GM12878 (cell line): ENCODE measurements at regions of chr3 and their contacts with region 1.

Region 1: GRCh38 chr3:129238945-129239706 is 10.3 kb upstream of the COPG1 start:
- DNase-seq: no peak
- ATAC-seq: peak; percentile 81
- H3K4me3 ChIP-seq: no peak overlapping the region; the same call in 1 of the 2 replicates
- H3K27ac ChIP-seq: no peak overlapping the region
- H3K4me1 ChIP-seq: peaks cover 13% of the 10 kb centered on the region
- H3K27me3 ChIP-seq: no peaks in the 10 kb centered on the region
- CTCF ChIP-seq: no peak
- EP300 ChIP-seq: no peak
- POLR2A ChIP-seq: no peak
- RAD21 ChIP-seq: no peak

Region 2: GRCh38 chr3:128714887-128715491 is 524.1 kb before region 1 on chr3:
- CTCF ChIA-PET with region 1: no interaction called
- POLR2A ChIA-PET with region 1: no interaction called
- RAD21 ChIA-PET with region 1: no interaction called
- SMC1A ChIA-PET with region 1: no interaction called
- in situ Hi-C with region 1: no loop called
- intact Hi-C with region 1: no loop called
- DNase-seq: no peak
- ATAC-seq: peak; percentile 51
- H3K4me3 ChIP-seq: no peak overlapping the region
- H3K27ac ChIP-seq: no peak overlapping the region
- H3K4me1 ChIP-seq: 0 out of 2 replicates have a peak, but pooled peaks cover 4% of the 10 kb centered on the region
- H3K27me3 ChIP-seq: no peaks in the 10 kb centered on the region
- CTCF ChIP-seq: no peak
- EP300 ChIP-seq: no peak
- POLR2A ChIP-seq: no peak
- RAD21 ChIP-seq: no peak

Region 3: DNA sequence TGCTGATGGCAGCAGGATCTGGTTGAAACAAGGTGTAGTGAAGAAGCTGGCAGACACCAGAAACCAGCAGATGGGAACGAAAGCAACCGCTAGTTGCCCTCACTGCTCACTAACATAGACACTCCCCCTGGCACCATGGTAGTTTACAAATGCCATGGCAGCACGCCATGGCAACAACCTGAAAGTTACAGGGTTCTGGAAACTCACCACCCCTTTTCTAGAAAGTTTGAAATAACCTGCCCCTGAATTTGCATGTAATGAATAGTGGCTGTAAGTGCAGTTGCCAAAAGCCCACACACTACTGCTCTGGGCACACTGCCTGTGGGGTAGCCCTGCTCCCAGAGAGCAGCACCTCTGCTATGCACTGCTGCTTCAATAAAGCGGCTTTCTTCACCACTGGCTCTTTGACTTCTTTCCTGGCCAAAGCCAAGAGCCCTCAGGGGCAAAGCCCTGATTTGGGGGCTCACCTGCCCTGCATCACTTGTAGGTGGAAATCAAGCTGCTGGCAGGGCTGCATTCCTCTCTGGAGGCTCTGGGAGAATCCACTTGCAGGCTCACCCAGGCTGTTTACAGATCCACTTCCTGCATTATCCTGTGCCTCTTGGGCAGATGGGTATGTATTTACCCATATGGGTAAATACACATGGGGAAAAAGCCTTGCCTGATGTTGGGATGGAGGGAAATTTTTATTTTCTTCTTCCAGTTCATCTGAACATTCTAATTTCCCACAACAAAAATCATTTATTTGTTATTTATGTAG is 180.5 kb before region 1 on chr3:
- CTCF ChIA-PET with region 1: interaction called, 220 read pairs
- POLR2A ChIA-PET with region 1: interaction called, 4 read pairs
- RAD21 ChIA-PET with region 1: interaction called, 88 read pairs
- SMC1A ChIA-PET with region 1: interaction called, 118 read pairs
- in situ Hi-C with region 1: loop called (anchors 5 kb)
- intact Hi-C with region 1: no loop called
- DNase-seq: peak; percentile 48
- ATAC-seq: peak; percentile 82
- H3K4me3 ChIP-seq: no peak overlapping the region
- H3K27ac ChIP-seq: no peak overlapping the region
- H3K4me1 ChIP-seq: 0 out of 2 replicates have a peak, but pooled peaks cover 3% of the 10 kb centered on the region
- H3K27me3 ChIP-seq: no peaks in the 10 kb centered on the region; a peak in 1 of 4 replicates
- CTCF ChIP-seq: no peak
- EP300 ChIP-seq: no peak
- POLR2A ChIP-seq: no peak
- RAD21 ChIP-seq: no peak

Region 4: DNA sequence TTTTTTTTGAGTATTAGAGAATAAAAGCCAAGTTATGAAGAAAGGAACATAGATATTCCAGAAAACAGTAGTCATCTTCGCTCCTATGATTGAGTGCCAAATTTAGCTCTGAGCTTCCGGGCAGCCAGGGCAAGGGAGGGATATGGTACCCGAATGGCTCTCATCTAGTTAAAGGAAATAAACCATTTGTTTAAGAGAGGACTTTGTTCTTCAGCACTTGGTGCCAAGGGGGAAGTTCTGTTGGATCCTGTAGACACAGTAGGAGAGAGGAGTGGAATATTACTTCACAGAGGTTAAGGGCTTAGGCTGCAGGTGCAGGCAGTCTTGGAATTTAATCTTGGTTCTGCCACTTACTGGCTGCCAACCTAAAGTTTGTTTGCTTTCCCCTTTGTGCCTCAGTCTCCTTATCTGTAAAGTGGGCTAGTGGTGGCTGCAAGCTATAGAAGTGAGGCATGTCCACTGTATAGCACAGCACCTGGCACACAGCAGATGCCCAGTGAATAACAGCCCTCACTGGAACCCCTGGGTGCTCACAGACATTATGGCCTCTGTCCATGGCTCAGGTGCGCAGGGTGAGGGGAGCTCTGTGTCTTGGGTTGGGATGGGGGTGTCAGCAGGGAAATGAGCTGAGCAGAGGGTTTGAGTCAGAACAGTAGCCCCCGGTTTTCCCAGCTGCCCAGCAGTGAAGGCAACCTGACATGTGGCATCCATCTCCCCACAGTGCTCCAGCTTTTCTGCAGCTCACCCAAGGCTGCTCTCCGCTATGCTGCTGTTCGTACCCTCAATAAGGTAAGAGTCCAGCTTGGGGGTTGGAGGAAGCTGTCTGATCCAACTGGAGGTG is 20.7 kb after region 1 on chr3:
- CTCF ChIA-PET with region 1: no interaction called
- POLR2A ChIA-PET with region 1: no interaction called
- RAD21 ChIA-PET with region 1: no interaction called
- SMC1A ChIA-PET with region 1: no interaction called
- in situ Hi-C with region 1: no loop called
- intact Hi-C with region 1: no loop called
- DNase-seq: no peak
- ATAC-seq: no peak; the same call in 2 of the 3 replicates
- H3K4me3 ChIP-seq: no peak overlapping the region
- H3K27ac ChIP-seq: no peak overlapping the region
- H3K4me1 ChIP-seq: no peaks in the 10 kb centered on the region
- H3K27me3 ChIP-seq: no peaks in the 10 kb centered on the region
- CTCF ChIP-seq: no peak
- EP300 ChIP-seq: no peak
- POLR2A ChIP-seq: peak; percentile 32; the same call in 1 of the 2 replicates
- RAD21 ChIP-seq: no peak